GM12878 (cell line): ENCODE measurements at regions of chr14 and their contacts with region 1.

Region 1: GRCh38 chr14:35963209-35963608 is 137.1 kb downstream of the BRMS1L start:
- DNase-seq: no peak
- ATAC-seq: peak; percentile 78
- H3K4me3 ChIP-seq: no peak overlapping the region
- H3K27ac ChIP-seq: no peak overlapping the region
- H3K4me1 ChIP-seq: no peaks in the 10 kb centered on the region
- H3K27me3 ChIP-seq: no peaks in the 10 kb centered on the region
- CTCF ChIP-seq: peak; percentile 33 to 53 (median 33); a peak in 5 of 6 replicates
- EP300 ChIP-seq: no peak
- POLR2A ChIP-seq: no peak
- RAD21 ChIP-seq: peak; percentile 33; the same call in 1 of the 2 replicates

Region 2: DNA sequence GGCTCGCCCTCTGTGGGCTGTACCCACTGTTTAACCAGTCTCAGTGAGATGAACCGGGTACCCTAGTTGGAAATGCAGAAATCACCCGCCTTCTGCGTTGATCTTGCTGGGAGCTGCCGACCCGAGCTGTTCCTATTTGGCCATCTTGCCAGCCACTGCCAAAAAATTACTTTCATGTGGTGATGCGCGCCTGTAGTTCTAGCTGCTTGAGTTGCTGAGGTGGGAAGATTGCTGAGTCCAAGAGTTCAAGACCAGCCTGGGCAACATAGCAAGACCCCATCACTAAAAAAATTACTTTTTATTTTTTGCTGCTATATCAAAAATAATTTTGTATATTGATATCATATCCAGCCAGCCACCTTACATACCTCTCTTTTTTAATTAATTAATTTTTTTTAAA is 118.7 kb before region 1 on chr14:
- CTCF ChIA-PET with region 1: no interaction called
- POLR2A ChIA-PET with region 1: no interaction called
- RAD21 ChIA-PET with region 1: no interaction called
- SMC1A ChIA-PET with region 1: no interaction called
- in situ Hi-C with region 1: no loop called
- intact Hi-C with region 1: no loop called
- DNase-seq: no peak
- ATAC-seq: no peak
- H3K4me3 ChIP-seq: no peak overlapping the region
- H3K27ac ChIP-seq: no peak overlapping the region
- H3K4me1 ChIP-seq: no peaks in the 10 kb centered on the region
- H3K27me3 ChIP-seq: no peaks in the 10 kb centered on the region
- CTCF ChIP-seq: no peak
- EP300 ChIP-seq: no peak
- POLR2A ChIP-seq: no peak
- RAD21 ChIP-seq: no peak

Region 3: DNA sequence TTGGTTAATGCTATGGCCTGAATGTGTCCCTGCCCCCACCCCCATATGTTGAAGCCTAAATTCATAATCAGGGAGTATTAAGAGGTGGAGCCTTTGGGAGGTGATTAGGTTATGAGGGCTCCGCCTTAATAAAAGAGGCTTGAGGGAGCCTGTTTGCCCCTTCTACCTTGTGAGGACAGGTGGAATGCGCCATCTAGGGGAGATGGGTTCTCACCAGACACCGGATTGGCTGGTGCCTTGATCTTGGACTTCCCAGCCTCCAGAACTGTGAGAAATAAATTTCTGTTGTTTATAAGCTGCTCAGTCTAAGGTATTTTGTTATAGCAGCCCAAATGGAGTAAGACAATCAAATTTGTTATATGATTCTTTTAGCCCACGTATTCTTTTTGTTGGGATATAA is 65.0 kb after region 1 on chr14:
- CTCF ChIA-PET with region 1: interaction called, 3 read pairs
- POLR2A ChIA-PET with region 1: no interaction called
- RAD21 ChIA-PET with region 1: no interaction called
- SMC1A ChIA-PET with region 1: no interaction called
- in situ Hi-C with region 1: no loop called
- intact Hi-C with region 1: loop called (anchors 2 kb)
- DNase-seq: no peak
- ATAC-seq: peak; percentile 72
- H3K4me3 ChIP-seq: no peak overlapping the region
- H3K27ac ChIP-seq: no peak overlapping the region
- H3K4me1 ChIP-seq: no peaks in the 10 kb centered on the region
- H3K27me3 ChIP-seq: no peaks in the 10 kb centered on the region
- CTCF ChIP-seq: peak; percentile 24 to 41 (median 25); a peak in 3 of 6 replicates
- EP300 ChIP-seq: no peak
- POLR2A ChIP-seq: no peak
- RAD21 ChIP-seq: peak; percentile 61